Caco-2 (cell line): ENCODE measurements at regions of chr6 and their contacts with region 1.

Region 1: GRCh38 chr6:83057705-83058321 is 7.8 kb downstream of the UBE3D start:
- DNase-seq: peak in 1 of 2 experiments; percentile 53
- H3K4me3 ChIP-seq: no peak overlapping the region
- H3K4me3 Mint-ChIP-seq: no peak overlapping the region
- H3K27ac Mint-ChIP-seq: no peak overlapping the region
- H3K4me1 ChIP-seq: no peaks in the 10 kb centered on the region
- H3K4me1 Mint-ChIP-seq: no peaks in the 10 kb centered on the region
- H3K27me3 ChIP-seq: no peaks in the 10 kb centered on the region
- H3K27me3 Mint-ChIP-seq: no peaks in the 10 kb centered on the region
- CTCF ChIP-seq: peak; percentile 68 to 87

Region 2: DNA sequence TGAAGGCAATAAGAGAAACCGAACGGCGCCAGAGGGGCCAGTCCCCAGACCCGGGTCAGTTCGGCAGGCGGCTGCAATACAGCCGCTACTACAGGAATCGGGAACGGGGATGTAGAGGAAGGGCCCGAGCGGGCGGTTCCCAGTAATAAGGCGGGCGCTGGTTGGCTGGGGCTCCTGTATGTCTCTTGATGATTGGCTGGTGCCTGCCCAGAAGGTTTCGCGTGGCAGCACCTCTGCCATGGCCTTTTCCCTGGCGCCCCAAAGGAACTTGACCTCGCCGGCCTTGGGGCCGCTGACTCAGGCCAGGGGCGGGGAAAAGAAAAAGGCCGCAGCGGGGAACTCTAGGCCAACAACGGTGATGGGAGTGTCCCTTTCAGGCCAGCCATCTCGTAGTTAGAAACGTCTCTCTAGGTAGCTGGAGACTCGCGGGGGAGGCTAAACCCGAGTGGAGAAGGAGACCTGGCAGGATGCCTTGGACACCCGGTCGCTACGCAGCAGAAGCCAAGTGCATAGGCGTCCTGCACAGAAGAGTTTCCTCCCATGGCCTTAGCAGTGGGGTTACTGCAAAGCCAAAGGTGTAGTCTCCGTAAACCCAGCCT is 810.1 kb before region 1 on chr6 and contains the start of gene IBTK:
- CTCF ChIA-PET with region 1: no interaction called
- POLR2A ChIA-PET with region 1: no interaction called
- intact Hi-C with region 1: loop called (anchors 1 kb)
- DNase-seq: peak; percentile 95 to 97
- H3K4me3 ChIP-seq: peak within 1 kb of the TSS; percentile 74
- H3K4me3 Mint-ChIP-seq: peak within 1 kb of the TSS; percentile 90
- H3K27ac Mint-ChIP-seq: peak within 1 kb of the TSS; percentile 96
- H3K4me1 ChIP-seq: peaks cover 28% of the 10 kb centered on the region
- H3K4me1 Mint-ChIP-seq: peaks cover 20% of the 10 kb centered on the region
- H3K27me3 ChIP-seq: no peaks in the 10 kb centered on the region
- H3K27me3 Mint-ChIP-seq: no peaks in the 10 kb centered on the region
- CTCF ChIP-seq: no peak
- total RNA-seq, gene IBTK: 29.4 and 30.3 TPM in 2 replicates

Region 3: GRCh38 chr6:82331031-82331773 is 726.6 kb before region 1 on chr6:
- CTCF ChIA-PET with region 1: interaction called, 4 read pairs
- POLR2A ChIA-PET with region 1: no interaction called
- intact Hi-C with region 1: loop called (anchors 1 kb)
- DNase-seq: peak in 1 of 2 experiments; percentile 22
- H3K4me3 ChIP-seq: no peak overlapping the region
- H3K4me3 Mint-ChIP-seq: no peak overlapping the region
- H3K27ac Mint-ChIP-seq: no peak overlapping the region
- H3K4me1 ChIP-seq: 0 out of 2 replicates have a peak, but pooled peaks cover 7% of the 10 kb centered on the region
- H3K4me1 Mint-ChIP-seq: no peaks in the 10 kb centered on the region
- H3K27me3 ChIP-seq: no peaks in the 10 kb centered on the region
- H3K27me3 Mint-ChIP-seq: peaks cover 3% of the 10 kb centered on the region
- CTCF ChIP-seq: peak in 1 of 2 experiments; percentile 4

Region 4: DNA sequence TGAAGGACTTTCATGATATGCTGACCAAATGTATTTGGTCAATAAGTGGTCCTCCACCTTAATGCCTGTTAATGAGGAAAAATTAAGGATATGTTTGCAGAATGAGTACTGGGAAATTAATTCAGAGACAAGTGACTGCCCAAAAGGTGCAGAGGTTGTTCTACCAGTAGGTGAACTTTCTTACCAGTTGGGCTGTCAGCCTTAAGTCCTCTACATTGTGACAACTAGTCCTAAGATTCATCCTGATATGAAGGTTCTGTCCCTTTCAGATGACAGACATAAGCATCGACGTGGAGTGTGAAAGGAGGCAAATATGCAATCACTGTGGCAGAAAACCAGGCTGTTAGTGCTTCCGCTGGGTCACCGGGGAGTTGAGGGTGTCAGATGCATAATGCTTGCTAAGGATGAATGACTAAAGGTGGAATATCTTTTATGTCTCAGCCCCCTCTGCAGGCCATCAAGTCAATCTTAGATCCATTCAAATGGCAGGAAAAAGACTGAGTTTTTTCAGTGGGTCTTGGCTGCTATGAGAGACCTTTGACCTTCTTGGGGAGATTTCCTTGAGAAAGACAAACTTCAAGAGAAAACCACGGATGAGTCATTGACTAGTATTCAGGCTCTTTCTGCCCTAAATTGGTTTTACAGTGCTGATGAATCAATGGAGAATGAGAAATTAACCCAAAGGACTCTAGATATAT is 468.2 kb before region 1 on chr6:
- CTCF ChIA-PET with region 1: no interaction called
- POLR2A ChIA-PET with region 1: no interaction called
- intact Hi-C with region 1: loop called (anchors 1 kb)
- DNase-seq: peak; percentile 38
- H3K4me3 ChIP-seq: no peak overlapping the region
- H3K4me3 Mint-ChIP-seq: no peak overlapping the region
- H3K27ac Mint-ChIP-seq: no peak overlapping the region
- H3K4me1 ChIP-seq: peaks cover 19% of the 10 kb centered on the region
- H3K4me1 Mint-ChIP-seq: peaks cover 14% of the 10 kb centered on the region
- H3K27me3 ChIP-seq: no peaks in the 10 kb centered on the region
- H3K27me3 Mint-ChIP-seq: no peaks in the 10 kb centered on the region
- CTCF ChIP-seq: peak in 1 of 2 experiments; percentile 50

Region 5: GRCh38 chr6:82904860-82905259 is 153.0 kb before region 1 on chr6:
- CTCF ChIA-PET with region 1: no interaction called
- POLR2A ChIA-PET with region 1: no interaction called
- intact Hi-C with region 1: loop called (anchors 5 kb)
- DNase-seq: no peak
- H3K4me3 ChIP-seq: no peak overlapping the region
- H3K4me3 Mint-ChIP-seq: no peak overlapping the region
- H3K27ac Mint-ChIP-seq: no peak overlapping the region
- H3K4me1 ChIP-seq: 0 out of 2 replicates have a peak, but pooled peaks cover 3% of the 10 kb centered on the region
- H3K4me1 Mint-ChIP-seq: peaks cover 10% of the 10 kb centered on the region
- H3K27me3 ChIP-seq: no peaks in the 10 kb centered on the region
- H3K27me3 Mint-ChIP-seq: no peaks in the 10 kb centered on the region
- CTCF ChIP-seq: no peak